ENCODE measurements at regions of chr11 and their contacts with region 1.

Region 1: GRCh38 chr11:48034926-48035871 is 54.8 kb downstream of the PTPRJ start:
- DNase-seq: no peak
- H3K4me3 ChIP-seq: no peak overlapping the region
- H3K4me3 Mint-ChIP-seq: peak overlapping the region in 1 of 7 donors; percentile 20
- H3K27ac ChIP-seq: no peak overlapping the region
- H3K27ac Mint-ChIP-seq: peak overlapping the region in 6 of 8 donors; percentile 47 to 78 (median 52)
- H3K4me1 ChIP-seq: peaks cover 44% of the 10 kb centered on the region
- H3K4me1 Mint-ChIP-seq: peaks cover 56 to 76% (median 70%) of the 10 kb centered on the region in 3 donors
- H3K27me3 ChIP-seq: no peaks in the 10 kb centered on the region
- H3K27me3 Mint-ChIP-seq: no peaks in the 10 kb centered on the region

Region 2: GRCh38 chr11:47879259-47880158 is 155.7 kb before region 1 on chr11:
- CTCF ChIA-PET with region 1: no interaction called
- POLR2A ChIA-PET with region 1: no interaction called
- DNase-seq: no peak
- H3K4me3 ChIP-seq: no peak overlapping the region
- H3K4me3 Mint-ChIP-seq: no peak overlapping the region
- H3K27ac ChIP-seq: no peak overlapping the region
- H3K27ac Mint-ChIP-seq: no peak overlapping the region
- H3K4me1 ChIP-seq: peaks cover 2% of the 10 kb centered on the region
- H3K4me1 Mint-ChIP-seq: peaks cover 0 to 2% (median 0%) of the 10 kb centered on the region in 3 donors
- H3K27me3 ChIP-seq: no peaks in the 10 kb centered on the region
- H3K27me3 Mint-ChIP-seq: peaks cover 11 to 24% of the 10 kb centered on the region in 2 donors

Region 3: GRCh38 chr11:48018528-48019216 is 16.5 kb before region 1 on chr11:
- CTCF ChIA-PET with region 1: interaction called, 3 read pairs
- POLR2A ChIA-PET with region 1: interaction called, 10 read pairs
- DNase-seq: no peak
- H3K4me3 ChIP-seq: peak overlapping the region; percentile 22
- H3K4me3 Mint-ChIP-seq: peak overlapping the region in 6 of 7 donors; percentile 53 to 89 (median 55)
- H3K27ac ChIP-seq: peak overlapping the region; percentile 25
- H3K27ac Mint-ChIP-seq: peak overlapping the region; percentile 37 to 100 (median 92)
- H3K4me1 ChIP-seq: peaks cover 72% of the 10 kb centered on the region
- H3K4me1 Mint-ChIP-seq: peaks cover 82 to 87% (median 86%) of the 10 kb centered on the region in 3 donors
- H3K27me3 ChIP-seq: no peaks in the 10 kb centered on the region
- H3K27me3 Mint-ChIP-seq: no peaks in the 10 kb centered on the region

Measured in CD8-positive, alpha-beta memory T cell (primary cell).